ENCODE measurements at regions of chr22 and their contacts with region 1.

Region 1: GRCh38 chr22:21629262-21630149 is at the start of gene YDJC:
- DNase-seq: peak; percentile 96
- ATAC-seq: peak; percentile 98
- total RNA-seq, gene YDJC: 4.5 TPM

Region 2: GRCh38 chr22:21579518-21580147 is 49.9 kb before region 1 on chr22:
- intact Hi-C with region 1: loop called (anchors 5 kb)
- DNase-seq: no peak
- ATAC-seq: no peak

Region 3: DNA sequence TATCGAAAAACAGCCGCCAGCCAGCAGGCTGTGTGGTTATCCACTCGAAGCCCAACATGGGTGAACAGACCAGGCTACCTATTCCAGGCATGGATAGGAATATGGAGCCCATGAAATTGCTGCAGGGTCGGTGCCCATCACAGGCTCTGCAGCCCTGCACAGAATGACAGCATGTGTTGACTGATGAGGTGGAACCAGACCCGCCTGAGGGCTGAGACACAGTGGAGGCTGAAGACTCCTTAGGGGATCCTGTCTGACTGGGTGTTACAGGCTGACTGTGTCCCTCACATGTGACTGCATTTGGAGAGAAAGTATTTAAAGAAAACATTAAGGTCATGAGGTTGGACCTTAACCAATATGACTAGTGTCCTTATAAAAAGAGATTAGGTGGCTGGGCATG is 112.3 kb after region 1 on chr22:
- intact Hi-C with region 1: no loop called
- DNase-seq: no peak
- ATAC-seq: no peak

Measured in Right ventricle myocardium superior (tissue), 1 donor.